Mammary epithelial cell (primary cell): ENCODE measurements at regions of chr15 and their contacts with region 1.

Region 1: GRCh38 chr15:74460871-74461846 is at the start of gene UBL7:
- DNase-seq: peak; percentile 97
- H3K4me3 ChIP-seq: peak within 1 kb of the TSS; percentile 63 to 96 (median 94)
- H3K27ac ChIP-seq: peak within 1 kb of the TSS; percentile 82
- H3K4me1 ChIP-seq: peaks cover 13% of the 10 kb centered on the region
- H3K27me3 ChIP-seq: no peaks in the 10 kb centered on the region
- CTCF ChIP-seq: peak in 1 of 2 donors; percentile 39
- total RNA-seq, gene UBL7: 36.4 to 41.7 TPM

Region 2: DNA sequence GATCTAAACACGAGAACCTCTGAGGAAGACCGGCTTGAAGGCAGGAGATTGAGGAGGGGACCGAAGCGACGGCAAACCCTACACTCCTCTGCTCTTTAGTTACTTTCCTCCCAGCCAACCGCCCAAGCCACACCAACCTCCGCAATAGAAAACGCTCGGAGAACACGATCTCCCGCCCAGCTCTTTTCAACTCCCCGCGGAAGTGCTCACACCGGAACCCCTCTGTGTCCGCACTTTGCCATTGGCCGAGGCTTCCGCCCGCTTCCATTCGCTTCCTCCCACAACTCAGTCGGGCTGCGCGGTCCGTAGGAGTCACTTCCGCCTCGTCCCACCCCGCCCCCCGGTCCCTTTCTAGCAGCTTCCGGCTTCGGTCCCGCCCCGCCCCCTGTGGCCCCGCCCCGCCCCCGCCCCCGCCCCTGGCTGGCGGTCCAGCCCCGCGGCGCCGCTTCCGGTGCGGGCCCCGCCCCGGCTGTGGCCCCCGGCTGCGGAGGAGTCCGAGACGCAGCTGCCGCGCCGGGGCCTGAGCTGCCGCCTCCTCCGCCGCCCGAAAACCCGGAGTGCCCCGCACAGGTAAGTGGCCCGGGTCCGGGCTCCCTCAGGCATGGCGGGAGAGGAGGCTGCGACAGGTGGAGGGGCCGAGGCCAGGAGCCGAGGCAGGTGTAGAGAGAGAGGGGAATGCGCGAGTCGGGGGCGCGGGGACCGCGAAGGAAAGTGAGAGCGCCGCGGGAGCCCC is 79.8 kb after region 1 on chr15 and contains the start of gene ARID3B:
- CTCF ChIA-PET with region 1: interaction called, 10 read pairs
- dilution Hi-C with region 1: no loop called
- in situ Hi-C with region 1: loop called in 1 of 2 experiments (anchors 5 kb)
- intact Hi-C with region 1: loop called (anchors 1 kb)
- DNase-seq: peak; percentile 96
- H3K4me3 ChIP-seq: peak within 1 kb of the TSS; percentile 86 to 95 (median 95)
- H3K27ac ChIP-seq: peak within 1 kb of the TSS; percentile 90
- H3K4me1 ChIP-seq: peaks cover 39% of the 10 kb centered on the region
- H3K27me3 ChIP-seq: no peaks in the 10 kb centered on the region
- CTCF ChIP-seq: no peak
- total RNA-seq, gene ARID3B: 7.0 to 12.8 TPM